Activated CD4-positive, alpha-beta memory T cell treated with anti-CD3 and anti-CD28 coated beads for 36 hours (primary cell): ENCODE measurements at regions of chr2 and their contacts with region 1.

Region 1: DNA sequence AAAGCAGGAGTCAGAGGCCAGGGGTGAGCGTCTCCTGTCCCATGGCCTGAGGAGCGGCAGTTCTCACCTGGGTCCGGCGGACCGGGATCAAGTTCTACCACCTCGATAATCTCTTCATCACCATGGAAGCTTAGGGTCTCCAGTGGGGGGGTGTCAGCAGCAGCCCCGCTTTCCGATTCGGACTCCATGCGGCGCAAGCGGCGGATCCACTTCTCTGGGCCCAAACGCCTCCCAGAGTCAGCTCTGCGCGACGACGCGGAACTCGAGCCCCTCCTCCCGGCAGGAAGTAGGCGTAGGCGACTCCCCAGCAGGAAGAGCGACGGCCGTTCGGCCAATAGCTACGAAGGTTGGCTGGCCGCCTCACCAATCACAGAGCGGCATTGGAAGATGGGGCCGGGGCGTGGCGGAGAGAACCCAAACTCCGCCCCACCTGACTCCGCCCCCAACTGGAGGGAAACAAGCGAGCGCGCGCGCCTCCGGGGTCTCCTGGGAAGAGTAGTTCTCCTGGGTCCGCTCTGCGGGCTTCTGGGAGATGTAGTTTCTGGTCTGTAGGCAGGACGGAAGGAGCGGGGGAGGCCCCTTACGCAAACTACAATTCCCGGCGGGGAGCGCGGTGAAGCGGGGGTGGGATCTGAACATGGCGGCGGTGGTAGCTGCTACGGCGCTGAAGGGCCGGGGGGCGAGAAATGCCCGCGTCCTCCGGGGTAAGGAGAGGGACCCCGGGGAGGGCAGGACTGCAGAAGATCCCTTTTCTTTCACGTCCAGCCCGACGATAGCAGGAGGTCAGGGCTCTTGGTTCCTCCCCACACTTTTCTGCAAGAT is at the starts of genes AAMP and PNKD:
- DNase-seq: peak; percentile 100
- H3K4me3 Mint-ChIP-seq: peak within 1 kb of the TSS; percentile 84
- H3K27ac Mint-ChIP-seq: peak within 1 kb of the TSS; percentile 82
- H3K4me1 Mint-ChIP-seq: peaks cover 29% of the 10 kb centered on the region
- H3K27me3 Mint-ChIP-seq: no peaks in the 10 kb centered on the region
- total RNA-seq, gene AAMP: 60.8 to 65.6 TPM
- total RNA-seq, gene PNKD: 18.4 to 19.4 TPM

Region 2: DNA sequence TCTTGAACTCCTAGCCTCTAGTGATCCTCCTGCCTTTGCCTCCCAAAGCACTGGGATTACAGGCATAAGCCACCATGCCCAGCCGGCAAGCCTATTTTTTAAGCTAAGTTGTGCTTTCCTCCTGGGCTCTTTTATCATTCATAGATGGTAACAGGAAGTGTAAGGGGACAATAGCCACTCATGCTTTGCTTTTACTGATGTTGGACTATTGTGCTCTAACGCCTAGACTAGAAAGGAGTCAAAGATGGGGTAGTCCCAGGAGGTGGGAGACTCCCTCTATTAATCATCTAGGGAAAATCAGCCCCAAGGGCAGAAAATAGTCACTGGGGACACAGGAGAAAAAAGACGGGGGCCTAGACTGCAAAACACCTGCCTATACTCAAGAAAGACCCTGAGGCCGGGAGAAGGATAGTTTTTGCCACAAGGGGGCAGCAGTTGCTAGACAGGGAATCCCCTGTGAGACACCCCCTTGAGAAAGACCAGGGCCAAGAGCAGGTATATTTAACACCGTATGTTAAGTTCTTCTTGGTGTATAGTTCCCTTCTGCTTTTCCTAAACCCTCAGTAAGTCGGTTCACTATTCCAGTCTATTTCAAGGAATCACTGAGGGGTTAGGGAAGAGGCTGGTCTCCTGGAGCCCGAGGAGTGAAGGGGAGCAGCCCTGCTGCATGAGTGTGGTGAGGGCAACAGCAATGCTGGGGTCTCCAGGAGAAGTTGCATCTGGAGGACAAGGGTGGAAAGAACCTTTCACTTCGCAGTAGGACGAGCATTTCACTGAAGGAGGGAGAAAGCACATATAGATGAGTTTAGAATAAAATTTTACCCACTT is 101.3 kb before region 1 on chr2:
- CTCF ChIA-PET with region 1: interaction called, 4 read pairs
- POLR2A ChIA-PET with region 1: no interaction called
- intact Hi-C with region 1: loop called (anchors 5 kb)
- DNase-seq: peak; percentile 75
- H3K4me3 Mint-ChIP-seq: no peak overlapping the region
- H3K27ac Mint-ChIP-seq: no peak overlapping the region
- H3K4me1 Mint-ChIP-seq: peaks cover 17% of the 10 kb centered on the region
- H3K27me3 Mint-ChIP-seq: no peaks in the 10 kb centered on the region

Region 3: DNA sequence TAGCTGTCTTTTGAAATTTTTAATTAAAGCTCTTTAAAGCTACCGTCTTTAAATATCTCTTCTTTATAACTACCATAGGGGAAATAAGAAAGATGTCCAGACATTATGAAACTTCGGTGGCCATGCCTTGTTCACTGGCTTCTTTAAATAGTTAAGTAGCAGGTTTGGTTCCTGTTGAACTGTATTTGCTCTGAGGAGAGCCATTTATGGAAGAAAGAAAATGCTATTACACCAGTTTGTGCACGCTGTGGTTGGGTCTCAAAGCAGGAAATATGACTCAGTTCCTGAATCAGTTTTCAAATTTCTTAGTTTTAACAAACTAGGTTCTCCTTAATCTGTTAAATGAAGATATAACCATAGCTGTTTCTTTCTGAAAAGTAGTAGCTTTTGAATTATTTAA is 40.9 kb before region 1 on chr2:
- CTCF ChIA-PET with region 1: interaction called, 6 read pairs
- POLR2A ChIA-PET with region 1: interaction called, 5 read pairs
- intact Hi-C with region 1: loop called (anchors 1 kb)
- DNase-seq: peak; percentile 63
- H3K4me3 Mint-ChIP-seq: peak overlapping the region; percentile 4
- H3K27ac Mint-ChIP-seq: peak overlapping the region; percentile 91
- H3K4me1 Mint-ChIP-seq: peaks cover 74% of the 10 kb centered on the region
- H3K27me3 Mint-ChIP-seq: no peaks in the 10 kb centered on the region

Region 4: GRCh38 chr2:218292048-218293014 is 22.2 kb after region 1 on chr2 and contains the start of gene TMBIM1:
- CTCF ChIA-PET with region 1: interaction called, 197 read pairs
- POLR2A ChIA-PET with region 1: interaction called, 115 read pairs
- intact Hi-C with region 1: no loop called
- DNase-seq: peak; percentile 83
- H3K4me3 Mint-ChIP-seq: peak within 1 kb of the TSS; percentile 80
- H3K27ac Mint-ChIP-seq: peak within 1 kb of the TSS; percentile 89
- H3K4me1 Mint-ChIP-seq: peaks cover 51% of the 10 kb centered on the region
- H3K27me3 Mint-ChIP-seq: no peaks in the 10 kb centered on the region
- total RNA-seq, gene TMBIM1: 71.8 to 79.2 TPM

Region 5: DNA sequence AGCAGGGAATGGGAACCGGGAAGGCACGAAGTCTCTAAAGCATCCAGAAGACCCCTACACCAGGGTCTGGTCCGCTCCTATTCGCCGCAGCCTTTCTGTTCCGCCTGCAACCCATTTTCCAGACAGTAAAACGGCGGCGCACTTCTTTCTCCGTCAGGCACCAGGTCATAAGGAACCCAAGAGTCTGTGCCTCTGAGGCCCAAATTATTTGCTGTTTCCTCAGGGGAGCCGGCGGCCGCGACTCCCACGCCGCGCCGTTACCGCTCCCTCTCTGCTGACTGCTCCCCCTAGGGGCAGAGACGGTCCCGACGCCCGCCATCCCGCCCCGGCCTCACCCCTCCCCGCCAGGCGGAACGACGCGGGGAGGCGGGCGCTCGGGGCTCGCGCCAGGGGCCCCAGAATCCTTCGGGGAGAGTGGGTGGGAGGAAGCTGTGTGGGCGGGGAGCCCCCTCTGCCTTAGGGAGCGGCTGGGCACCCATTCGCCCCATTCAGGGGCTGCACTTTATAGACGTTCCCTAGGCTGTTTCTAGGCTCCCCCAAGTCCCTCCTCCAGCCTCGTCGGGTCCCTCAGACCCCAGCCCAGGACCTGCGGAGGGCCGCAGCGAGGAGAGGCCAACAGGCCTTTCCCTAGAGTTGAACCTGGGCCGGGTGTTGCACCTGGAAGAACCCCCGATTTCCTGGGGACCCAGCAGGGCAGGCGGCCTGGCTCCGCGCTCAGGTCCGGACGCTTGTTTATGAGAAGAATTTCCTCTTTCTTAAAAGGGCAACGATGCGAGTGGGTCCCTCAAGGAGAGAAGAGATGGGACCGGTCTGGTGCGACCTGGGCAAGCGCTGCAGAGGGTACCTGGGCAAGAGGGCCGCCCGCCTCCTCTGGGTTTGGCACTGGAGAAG is 125.9 kb after region 1 on chr2:
- CTCF ChIA-PET with region 1: interaction called, 8 read pairs
- POLR2A ChIA-PET with region 1: no interaction called
- intact Hi-C with region 1: loop called (anchors 1 kb)
- DNase-seq: peak; percentile 96
- H3K4me3 Mint-ChIP-seq: peak overlapping the region; percentile 90
- H3K27ac Mint-ChIP-seq: peak overlapping the region; percentile 88
- H3K4me1 Mint-ChIP-seq: peaks cover 34% of the 10 kb centered on the region
- H3K27me3 Mint-ChIP-seq: no peaks in the 10 kb centered on the region

Region 6: GRCh38 chr2:218710687-218711549 is 440.8 kb after region 1 on chr2 and contains the start of gene TTLL4:
- CTCF ChIA-PET with region 1: no interaction called
- POLR2A ChIA-PET with region 1: no interaction called
- intact Hi-C with region 1: loop called (anchors 1 kb)
- DNase-seq: peak; percentile 99
- H3K4me3 Mint-ChIP-seq: peak within 1 kb of the TSS; percentile 88
- H3K27ac Mint-ChIP-seq: peak within 1 kb of the TSS; percentile 72
- H3K4me1 Mint-ChIP-seq: peaks cover 20% of the 10 kb centered on the region
- H3K27me3 Mint-ChIP-seq: no peaks in the 10 kb centered on the region
- total RNA-seq, gene TTLL4: 30.1 to 32.1 TPM